Endothelial cell of umbilical vein (primary cell): ENCODE measurements at regions of chr1 and their contacts with region 1.

Region 1: DNA sequence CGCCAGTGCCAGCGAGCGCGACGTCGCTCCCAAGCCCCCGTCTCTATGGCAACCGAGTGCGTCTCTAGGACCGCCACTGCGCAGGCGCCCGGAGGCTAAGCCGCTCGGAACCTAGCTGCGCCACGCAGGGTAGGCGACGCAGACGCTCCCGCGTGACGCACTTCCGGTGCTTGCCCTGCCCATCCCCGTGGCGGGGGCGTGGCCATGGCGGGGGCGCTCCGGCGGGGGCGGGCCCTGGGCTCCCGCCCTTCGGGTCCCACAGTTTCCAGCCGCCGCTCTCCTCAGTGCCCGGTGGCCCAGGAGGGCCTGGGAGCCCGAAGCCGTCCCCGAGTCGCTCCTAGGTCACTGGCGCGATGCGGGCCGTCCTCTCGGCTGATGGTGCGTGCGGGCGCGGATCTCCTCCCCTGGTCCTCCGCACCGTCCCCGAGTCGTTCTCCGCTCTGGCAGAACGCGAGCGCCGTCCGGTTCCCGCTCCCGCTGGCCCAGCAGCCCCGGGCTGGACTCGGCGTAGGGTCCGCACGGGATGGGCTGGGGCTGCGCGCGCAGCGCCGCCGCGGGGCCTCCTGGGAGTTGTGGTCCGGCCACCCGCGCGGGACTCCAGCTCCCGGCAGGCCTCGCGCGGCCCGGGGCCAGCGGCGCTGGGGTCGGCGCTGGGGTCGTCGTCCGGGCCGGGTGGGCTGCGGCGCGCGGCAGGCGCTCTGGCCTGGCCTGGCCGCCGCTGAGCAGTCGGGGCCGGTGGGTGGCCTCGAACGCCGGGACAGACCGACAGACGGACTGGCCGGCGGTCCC is at the start of gene MIB2:
- DNase-seq: peak; percentile 95
- H3K4me3 ChIP-seq: peak within 1 kb of the TSS; percentile 68 to 99 (median 74)
- H3K27ac ChIP-seq: peak within 1 kb of the TSS; percentile 99
- H3K4me1 ChIP-seq: peaks cover 16% of the 10 kb centered on the region
- H3K27me3 ChIP-seq: no peaks in the 10 kb centered on the region
- CTCF ChIP-seq: no peak
- POLR2A ChIP-seq: peak; percentile 75
- total RNA-seq, gene MIB2: 39.2 and 45.0 TPM in 2 replicates

Region 2: DNA sequence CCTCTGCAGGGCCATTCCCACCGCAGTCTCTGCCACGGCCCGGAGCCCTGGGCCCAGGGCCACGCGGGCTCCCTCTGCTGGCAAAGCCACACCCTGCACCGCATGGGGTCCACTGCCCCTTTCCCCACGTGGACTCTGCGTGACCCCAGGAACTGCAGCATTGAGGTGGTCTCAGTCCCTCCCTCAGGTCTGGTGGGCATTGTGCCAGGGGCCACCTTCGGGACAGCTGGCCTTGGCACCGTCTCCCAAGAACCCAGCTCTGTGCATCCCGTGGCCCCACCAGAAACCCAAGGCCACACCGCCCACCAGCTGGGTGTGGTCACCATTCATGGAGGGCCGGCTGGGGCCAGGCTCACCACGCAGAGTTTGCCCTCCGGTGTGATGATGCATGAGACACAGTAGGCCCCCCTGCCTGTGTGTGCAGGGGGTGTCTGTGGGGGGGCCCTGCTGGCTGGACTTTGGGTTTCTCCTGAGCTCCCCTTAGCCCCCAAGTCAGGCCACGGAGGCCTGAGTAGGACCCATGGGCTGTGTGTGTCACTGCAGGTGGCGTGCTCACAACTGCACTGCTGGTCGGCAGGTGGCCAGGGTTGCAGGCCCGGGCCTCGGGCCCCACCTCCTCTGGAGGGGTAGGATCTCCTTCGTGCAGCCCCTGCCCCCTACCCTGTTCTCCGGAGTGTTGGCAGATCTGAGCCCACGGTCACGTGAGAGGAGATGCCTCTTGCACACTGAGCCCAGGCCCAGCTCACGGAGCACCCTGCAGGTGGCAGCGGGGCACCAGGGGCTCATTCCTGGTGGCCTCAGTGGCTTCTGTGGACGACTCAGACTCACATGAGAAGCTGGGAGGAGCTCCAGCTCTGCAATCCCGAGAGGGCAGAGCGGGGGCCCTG is 174.2 kb before region 1 on chr1:
- CTCF ChIA-PET with region 1: no interaction called
- POLR2A ChIA-PET with region 1: no interaction called
- dilution Hi-C with region 1: no loop called
- intact Hi-C with region 1: no loop called
- DNase-seq: peak; percentile 37
- H3K4me3 ChIP-seq: no peak overlapping the region
- H3K27ac ChIP-seq: no peak overlapping the region
- H3K4me1 ChIP-seq: no peaks in the 10 kb centered on the region
- H3K27me3 ChIP-seq: no peaks in the 10 kb centered on the region
- CTCF ChIP-seq: peak; percentile 86 to 99
- POLR2A ChIP-seq: no peak

Region 3: DNA sequence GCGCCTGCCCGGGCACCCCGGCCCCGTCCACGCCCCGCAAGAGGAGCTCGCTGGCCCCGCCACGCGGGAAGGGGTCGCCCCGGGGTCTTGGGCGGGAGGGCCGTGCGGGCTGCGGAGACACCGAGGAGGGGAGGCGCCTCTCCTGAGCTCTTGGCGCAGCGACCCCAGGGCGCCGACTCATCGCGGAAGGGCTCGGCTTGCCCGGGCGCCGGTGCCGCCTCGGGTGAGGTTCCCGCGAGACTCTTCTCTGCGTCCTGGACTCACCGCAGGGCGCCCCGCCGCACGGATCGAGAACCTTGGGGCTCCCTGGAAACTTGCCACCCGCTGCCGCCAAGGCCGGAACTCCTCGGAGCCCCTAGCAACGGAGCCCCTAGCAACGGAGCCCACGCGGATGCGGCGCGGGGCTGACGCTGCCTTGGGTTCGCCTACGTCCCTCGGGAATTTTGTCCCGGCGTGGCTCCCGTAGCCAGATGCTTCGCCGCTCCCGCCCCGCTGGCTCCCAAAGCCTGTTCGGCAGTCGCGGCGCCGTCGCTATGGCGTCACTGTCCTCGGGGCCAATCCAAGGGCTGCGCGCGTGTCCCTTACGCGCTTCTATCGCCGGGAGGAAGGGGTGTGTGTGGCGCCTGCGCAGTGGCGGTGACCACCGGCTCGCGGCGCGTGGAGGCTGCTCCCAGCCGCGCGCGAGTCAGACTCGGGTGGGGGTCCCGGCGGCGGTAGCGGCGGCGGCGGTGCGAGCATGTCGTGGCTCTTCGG is 103.7 kb before region 1 on chr1 and contains the start of gene ATAD3A:
- CTCF ChIA-PET with region 1: no interaction called
- POLR2A ChIA-PET with region 1: no interaction called
- dilution Hi-C with region 1: no loop called
- intact Hi-C with region 1: loop called (anchors 5 kb)
- DNase-seq: peak; percentile 99
- H3K4me3 ChIP-seq: peak within 1 kb of the TSS; percentile 33 to 69 (median 61)
- H3K27ac ChIP-seq: peak within 1 kb of the TSS; percentile 96
- H3K4me1 ChIP-seq: peaks cover 4% of the 10 kb centered on the region
- H3K27me3 ChIP-seq: no peaks in the 10 kb centered on the region
- CTCF ChIP-seq: peak in 1 of 2 donors; percentile 0
- POLR2A ChIP-seq: peak; percentile 84
- total RNA-seq, gene ATAD3A: 55.2 and 57.4 TPM in 2 replicates

Region 4: GRCh38 chr1:1550591-1551432 is 64.6 kb before region 1 on chr1:
- CTCF ChIA-PET with region 1: no interaction called
- POLR2A ChIA-PET with region 1: no interaction called
- dilution Hi-C with region 1: no loop called
- intact Hi-C with region 1: no loop called
- DNase-seq: no peak
- H3K4me3 ChIP-seq: no peak overlapping the region
- H3K27ac ChIP-seq: no peak overlapping the region
- H3K4me1 ChIP-seq: no peaks in the 10 kb centered on the region
- H3K27me3 ChIP-seq: no peaks in the 10 kb centered on the region
- CTCF ChIP-seq: peak in 1 of 2 donors; percentile 31
- POLR2A ChIP-seq: no peak

Region 5: DNA sequence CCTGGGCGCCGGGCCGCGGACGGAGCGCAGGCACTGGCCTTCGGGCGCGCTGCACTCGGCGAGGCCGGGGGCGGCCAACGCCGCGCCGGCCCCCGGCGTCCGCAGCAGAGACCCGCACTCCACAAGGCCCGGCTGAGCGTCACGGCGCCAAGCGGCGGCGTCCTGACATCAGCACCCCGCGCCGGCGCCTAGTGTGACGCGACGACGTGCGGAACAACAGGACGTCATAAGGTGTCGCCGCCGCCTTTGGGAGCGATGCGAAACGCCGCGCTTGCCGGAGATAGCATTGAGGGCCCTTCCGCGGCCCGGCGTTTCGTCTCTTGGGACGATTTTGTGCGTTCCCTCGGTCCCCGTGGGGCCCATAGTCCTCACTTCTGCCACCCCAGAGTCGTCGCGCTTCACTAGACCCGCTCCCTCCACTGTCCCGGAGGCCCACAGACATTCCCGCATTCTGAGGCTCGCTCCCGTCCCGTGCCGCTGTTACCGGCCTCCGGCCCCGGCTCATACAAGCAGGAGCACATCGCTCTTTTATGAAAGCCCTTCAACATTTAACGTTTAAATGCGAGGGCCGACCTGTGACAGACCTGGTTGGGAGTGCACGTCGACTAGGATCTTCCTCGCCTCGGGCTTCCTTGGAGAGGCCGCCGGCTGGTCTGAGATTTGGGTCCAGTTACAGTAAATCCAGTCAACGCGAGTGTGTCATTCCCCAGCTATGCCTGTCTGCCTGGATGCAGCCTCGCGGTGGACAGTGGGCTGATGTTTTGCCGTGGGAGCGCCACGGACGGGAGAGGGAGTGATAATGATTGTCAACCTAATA is 40.5 kb before region 1 on chr1 and contains the start of gene SSU72:
- CTCF ChIA-PET with region 1: interaction called, 6 read pairs
- POLR2A ChIA-PET with region 1: interaction called, 7 read pairs
- dilution Hi-C with region 1: no loop called
- intact Hi-C with region 1: loop called (anchors 1 kb)
- DNase-seq: peak; percentile 88
- H3K4me3 ChIP-seq: peak within 1 kb of the TSS; percentile 52 to 97 (median 75)
- H3K27ac ChIP-seq: peak within 1 kb of the TSS; percentile 95
- H3K4me1 ChIP-seq: peaks cover 12% of the 10 kb centered on the region
- H3K27me3 ChIP-seq: no peaks in the 10 kb centered on the region
- CTCF ChIP-seq: no peak
- POLR2A ChIP-seq: peak; percentile 93
- total RNA-seq, gene SSU72: 124 and 129 TPM in 2 replicates